GM23248 (cell line): ENCODE measurements at regions of chr9 and their contacts with region 1.

Region 1: GRCh38 chr9:72586388-72587130 is 65.2 kb downstream of the TMC1 start:
- DNase-seq: peak; percentile 88
- H3K4me3 ChIP-seq: no peak overlapping the region
- H3K27ac ChIP-seq: 0 out of 2 replicates have a peak overlapping the region, but pooled peaks have one; percentile 16
- H3K4me1 ChIP-seq: peaks cover 43% of the 10 kb centered on the region
- H3K27me3 ChIP-seq: no peaks in the 10 kb centered on the region

Region 2: DNA sequence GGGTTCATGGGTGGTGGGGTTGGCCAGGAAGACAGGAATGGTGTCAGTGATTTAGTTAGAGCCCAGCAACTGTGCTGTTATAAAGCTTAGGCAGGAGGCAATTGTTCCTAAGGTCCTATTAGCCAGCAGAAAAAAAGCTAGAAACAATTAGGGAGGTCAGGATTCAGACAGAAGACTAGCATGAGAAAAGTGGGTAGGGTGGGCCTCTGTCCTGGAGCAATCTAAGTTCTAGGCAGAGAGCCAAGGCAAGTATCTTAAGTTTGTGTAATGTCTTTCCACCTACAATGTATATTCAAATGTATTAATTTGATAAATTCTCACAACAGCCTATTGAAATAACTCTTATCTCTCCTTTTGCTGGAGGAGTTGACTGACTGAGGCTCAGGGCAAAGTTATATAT is 215.4 kb before region 1 on chr9:
- in situ Hi-C with region 1: loop called (anchors 10 kb)
- DNase-seq: no peak
- H3K4me3 ChIP-seq: no peak overlapping the region
- H3K27ac ChIP-seq: no peak overlapping the region
- H3K4me1 ChIP-seq: no peaks in the 10 kb centered on the region
- H3K27me3 ChIP-seq: no peaks in the 10 kb centered on the region

Region 3: GRCh38 chr9:72695365-72695764 is 108.8 kb after region 1 on chr9:
- in situ Hi-C with region 1: no loop called
- DNase-seq: no peak
- H3K4me3 ChIP-seq: no peak overlapping the region
- H3K27ac ChIP-seq: no peak overlapping the region
- H3K4me1 ChIP-seq: no peaks in the 10 kb centered on the region
- H3K27me3 ChIP-seq: no peaks in the 10 kb centered on the region